B cell (primary cell): ENCODE measurements at regions of chr9 and their contacts with region 1.

Region 1: DNA sequence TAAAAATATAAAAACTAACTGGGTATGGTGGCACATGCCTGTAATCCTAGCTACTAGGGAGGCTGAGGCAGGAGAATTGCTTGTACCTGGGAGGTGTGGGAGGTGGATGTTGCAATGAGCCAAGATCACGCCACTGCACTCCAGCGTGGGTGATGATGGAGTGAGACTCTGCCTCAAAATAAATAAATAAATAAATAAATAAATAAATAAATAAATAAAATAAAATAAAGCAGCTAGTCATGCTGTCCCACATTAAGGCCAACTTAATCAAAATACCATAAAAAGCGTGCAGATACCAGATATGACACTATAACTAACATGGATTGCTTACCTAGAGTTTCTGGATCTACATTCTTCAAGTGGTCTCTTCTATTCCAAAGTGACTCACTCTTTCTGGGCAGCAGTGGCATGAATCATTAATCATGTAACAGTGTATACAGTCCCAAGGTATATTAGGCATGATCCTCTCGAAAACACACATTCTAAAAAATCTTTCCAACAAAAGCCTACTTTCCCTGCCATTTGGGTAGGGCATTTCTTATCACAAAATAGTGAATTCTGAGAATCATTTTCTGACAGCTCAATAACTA is 187.1 kb downstream of the ELAVL2 start:
- DNase-seq: no peak
- ATAC-seq: no peak
- H3K4me3 ChIP-seq: no peak overlapping the region
- H3K4me3 Mint-ChIP-seq: no peak overlapping the region
- H3K27ac ChIP-seq: no peak overlapping the region
- H3K27ac Mint-ChIP-seq: no peak overlapping the region
- H3K4me1 ChIP-seq: no peaks in the 10 kb centered on the region
- H3K4me1 Mint-ChIP-seq: no peaks in the 10 kb centered on the region
- H3K27me3 ChIP-seq: no peaks in the 10 kb centered on the region
- H3K27me3 Mint-ChIP-seq: no peaks in the 10 kb centered on the region
- CTCF ChIP-seq: no peak

Region 2: DNA sequence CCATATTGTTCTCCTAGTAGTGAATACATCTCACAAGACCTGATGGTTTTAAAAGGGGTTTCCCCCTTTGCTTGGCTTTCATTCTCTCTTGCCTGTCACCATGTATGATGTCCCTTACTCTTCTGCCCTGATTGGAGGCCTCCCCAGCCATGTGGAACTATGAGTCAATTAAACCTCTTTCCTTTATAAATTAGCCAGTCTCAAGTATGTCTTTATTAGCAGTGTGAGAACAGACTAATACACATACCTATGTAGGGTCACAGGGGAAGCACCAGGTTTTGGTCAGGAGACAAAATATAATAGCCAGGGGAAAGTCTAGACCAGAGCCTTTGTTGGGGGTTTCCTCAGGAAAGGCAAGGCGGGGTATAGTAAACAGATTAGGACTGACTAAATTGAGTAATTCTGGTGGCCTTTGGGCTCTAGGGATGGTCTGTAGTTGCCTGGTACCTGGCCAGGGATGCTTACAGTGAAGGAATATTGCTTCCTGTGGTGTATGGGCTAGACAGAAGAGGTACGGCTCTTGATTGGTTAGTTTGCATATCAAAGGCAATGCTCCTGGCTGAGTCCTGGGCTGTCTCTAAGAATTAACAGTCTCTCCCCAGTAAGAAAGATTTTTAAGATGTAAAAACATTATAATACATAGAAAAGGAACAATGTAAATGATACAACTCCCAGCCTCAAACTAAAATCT is 67.4 kb before region 1 on chr9:
- CTCF ChIA-PET with region 1: no interaction called
- POLR2A ChIA-PET with region 1: no interaction called
- intact Hi-C with region 1: loop called (anchors 10 kb)
- DNase-seq: no peak
- ATAC-seq: no peak
- H3K4me3 ChIP-seq: no peak overlapping the region
- H3K4me3 Mint-ChIP-seq: no peak overlapping the region
- H3K27ac ChIP-seq: no peak overlapping the region
- H3K27ac Mint-ChIP-seq: no peak overlapping the region
- H3K4me1 ChIP-seq: no peaks in the 10 kb centered on the region
- H3K4me1 Mint-ChIP-seq: no peaks in the 10 kb centered on the region
- H3K27me3 ChIP-seq: no peaks in the 10 kb centered on the region
- H3K27me3 Mint-ChIP-seq: no peaks in the 10 kb centered on the region
- CTCF ChIP-seq: no peak